Heart left ventricle (tissue), 16 donors: ENCODE measurements at regions of chr4 and their contacts with region 1.

Region 1: GRCh38 chr4:71553605-71554004 is 214.8 kb downstream of the SLC4A4 start:
- DNase-seq: no peak
- ATAC-seq: peak in 3 of 4 donors; percentile 70 to 81 (median 74)
- H3K4me3 ChIP-seq: no peak overlapping the region
- H3K27ac ChIP-seq: no peak overlapping the region
- H3K4me1 ChIP-seq: peaks cover 0 to 5% (median 0%) of the 10 kb centered on the region in 12 donors
- H3K27me3 ChIP-seq: no peaks in the 10 kb centered on the region
- CTCF ChIP-seq: peak; percentile 25 to 64 (median 51)
- POLR2A ChIP-seq: no peak

Region 2: GRCh38 chr4:71441186-71442169 is 112.1 kb before region 1 on chr4:
- intact Hi-C with region 1: no loop called
- DNase-seq: no peak
- ATAC-seq: no peak
- H3K4me3 ChIP-seq: no peak overlapping the region
- H3K27ac ChIP-seq: no peak overlapping the region
- H3K4me1 ChIP-seq: peaks cover 0 to 13% (median 2%) of the 10 kb centered on the region in 12 donors
- H3K27me3 ChIP-seq: no peaks in the 10 kb centered on the region
- CTCF ChIP-seq: no peak
- POLR2A ChIP-seq: no peak

Region 3: GRCh38 chr4:71460371-71460770 is 93.2 kb before region 1 on chr4:
- intact Hi-C with region 1: loop called in 1 of 10 experiments (anchors 10 kb)
- DNase-seq: no peak
- ATAC-seq: no peak
- H3K4me3 ChIP-seq: no peak overlapping the region
- H3K27ac ChIP-seq: no peak overlapping the region
- H3K4me1 ChIP-seq: peaks cover 0 to 12% (median 0%) of the 10 kb centered on the region in 12 donors
- H3K27me3 ChIP-seq: no peaks in the 10 kb centered on the region
- CTCF ChIP-seq: no peak
- POLR2A ChIP-seq: no peak

Region 4: DNA sequence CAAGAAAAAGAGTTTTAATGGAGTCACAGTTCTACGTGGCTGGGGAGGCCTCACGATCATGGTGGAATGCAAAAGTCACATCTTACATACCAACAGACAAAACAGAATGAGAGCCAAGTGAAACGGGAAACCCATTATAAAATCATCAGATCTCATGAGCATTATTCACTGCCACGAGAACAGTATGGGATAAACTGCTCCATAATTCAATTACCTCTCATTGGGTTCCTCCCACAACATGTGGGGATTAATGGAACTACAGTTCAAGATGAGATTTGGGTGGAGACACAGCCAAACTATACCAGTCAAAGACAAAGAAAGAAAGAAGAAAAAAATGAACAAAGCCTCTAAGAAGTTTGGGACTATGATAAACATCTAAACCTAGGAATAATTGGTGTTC is 71.4 kb after region 1 on chr4:
- intact Hi-C with region 1: no loop called
- DNase-seq: no peak
- ATAC-seq: no peak
- H3K4me3 ChIP-seq: no peak overlapping the region
- H3K27ac ChIP-seq: no peak overlapping the region
- H3K4me1 ChIP-seq: no peaks in the 10 kb centered on the region
- H3K27me3 ChIP-seq: no peaks in the 10 kb centered on the region
- CTCF ChIP-seq: no peak
- POLR2A ChIP-seq: no peak

Region 5: DNA sequence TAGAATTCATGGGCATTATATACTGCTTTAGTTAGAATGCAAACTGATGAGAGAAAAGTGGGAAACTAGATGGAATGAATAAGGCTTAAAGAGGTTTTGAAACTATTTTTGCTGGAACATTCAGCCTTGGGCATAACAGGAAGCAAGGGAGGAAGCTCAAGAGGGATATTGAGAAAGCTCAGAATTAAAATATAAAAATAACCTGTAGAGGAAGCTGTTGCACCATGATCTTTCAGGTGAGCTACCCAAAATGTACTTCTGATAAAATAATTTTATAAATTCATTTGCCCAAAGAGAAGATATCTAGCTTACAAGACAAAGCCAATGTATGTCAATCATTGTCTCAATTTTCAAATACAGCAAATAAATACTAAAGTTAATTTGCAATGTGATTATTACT is 219.0 kb after region 1 on chr4:
- intact Hi-C with region 1: no loop called
- DNase-seq: no peak
- ATAC-seq: no peak
- H3K4me3 ChIP-seq: no peak overlapping the region
- H3K27ac ChIP-seq: no peak overlapping the region
- H3K4me1 ChIP-seq: no peaks in the 10 kb centered on the region
- H3K27me3 ChIP-seq: peaks cover 0 to 5% (median 0%) of the 10 kb centered on the region in 9 donors
- CTCF ChIP-seq: peak in 2 of 12 donors; percentile 9 to 16
- POLR2A ChIP-seq: no peak